ENCODE measurements at regions of chr11 and their contacts with region 1.

Region 1: DNA sequence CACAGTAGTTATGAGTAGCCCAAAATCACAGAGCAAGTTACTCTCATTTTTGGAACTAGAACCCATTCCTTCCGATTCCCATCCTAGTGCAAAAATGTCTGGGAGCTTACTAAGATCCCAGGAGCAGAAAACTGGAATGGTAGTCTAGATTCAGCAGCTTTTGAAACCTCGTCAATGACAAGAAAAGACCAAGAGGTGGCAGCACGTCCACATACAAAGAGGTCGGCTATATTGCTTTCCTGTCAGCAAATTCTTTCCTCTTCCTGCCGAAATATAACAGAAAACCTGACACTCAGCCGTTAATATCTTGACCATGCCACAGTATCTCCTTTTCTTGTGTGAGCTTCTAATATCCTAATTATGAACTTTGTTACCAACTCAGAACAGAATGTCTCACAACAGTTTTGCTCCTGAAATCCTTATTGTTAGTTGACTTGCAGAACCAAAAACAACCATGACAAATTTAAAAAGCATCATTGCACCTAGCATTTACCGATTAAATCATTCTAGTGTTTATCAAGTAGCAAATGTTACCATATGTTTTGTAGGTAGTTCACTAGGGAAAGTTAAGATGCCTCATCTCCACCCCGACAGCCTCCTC is 92.8 kb upstream of the OR9G4 start:
- DNase-seq: peak; percentile 28
- ATAC-seq: peak; percentile 63 to 65

Region 2: DNA sequence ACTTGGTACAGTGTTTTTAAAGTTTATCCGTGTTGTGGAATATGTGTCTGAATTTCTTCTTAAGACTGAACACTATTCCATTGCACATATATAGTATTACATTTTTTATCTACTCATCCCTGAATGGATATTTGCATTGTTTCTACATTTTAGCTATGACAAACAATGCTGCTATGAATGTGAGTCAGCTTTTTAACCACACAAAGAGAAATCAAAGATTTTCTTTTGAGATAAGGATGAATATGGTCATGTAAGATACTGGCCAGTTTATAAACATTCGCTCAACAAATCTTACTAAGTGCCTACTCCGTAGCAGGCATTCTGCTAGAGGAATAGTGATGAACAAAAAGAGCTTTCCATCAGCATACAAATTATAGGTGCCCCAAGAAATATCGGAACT is 76.3 kb before region 1 on chr11:
- intact Hi-C with region 1: no loop called
- DNase-seq: no peak
- ATAC-seq: no peak

Region 3: GRCh38 chr11:57116654-57117053 is 275.3 kb after region 1 on chr11:
- intact Hi-C with region 1: loop called in 1 of 2 experiments (anchors 5 kb)
- DNase-seq: no peak
- ATAC-seq: peak; percentile 33 to 41

Region 4: DNA sequence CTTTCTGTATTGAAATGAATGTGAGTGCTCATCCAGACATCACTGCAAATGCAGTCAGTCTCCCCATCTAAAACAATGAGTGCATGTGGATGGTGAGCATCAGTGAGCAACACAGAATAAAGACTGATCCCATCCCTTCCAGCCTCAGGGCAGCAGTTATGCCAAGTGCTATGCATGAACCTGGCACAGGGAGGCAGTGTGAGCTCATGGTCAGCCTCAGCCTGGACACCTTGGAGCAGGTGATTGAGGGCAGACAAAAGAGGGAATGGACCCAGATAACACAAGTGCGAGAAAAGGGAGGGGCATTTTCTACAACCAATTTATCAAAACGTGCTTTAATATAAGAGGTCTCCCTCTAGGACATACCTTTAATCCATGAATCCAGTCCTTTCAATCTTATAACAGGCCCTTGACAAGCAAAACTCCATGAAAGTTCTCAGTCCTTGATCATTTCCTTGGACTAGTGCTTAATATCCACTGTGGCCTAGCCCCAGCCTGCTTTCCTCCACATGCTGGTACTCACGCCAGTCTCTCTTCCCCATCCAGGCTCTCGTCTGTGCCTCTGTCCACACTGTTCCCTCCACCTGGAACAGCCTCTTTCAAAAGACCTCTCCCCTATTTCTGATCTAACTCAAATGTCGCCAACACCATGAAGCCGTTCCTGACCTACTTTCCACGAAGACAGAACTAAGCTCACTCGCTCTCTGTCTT is 289.9 kb after region 1 on chr11:
- intact Hi-C with region 1: loop called in 1 of 2 experiments (anchors 5 kb)
- DNase-seq: peak; percentile 33
- ATAC-seq: peak; percentile 88 to 89